ENCODE measurements at regions of chr1 and their contacts with region 1.

Region 1: GRCh38 chr1:169521226-169521625 is 35.5 kb upstream of the SLC19A2 start:
- DNase-seq: no peak
- ATAC-seq: no peak

Region 2: DNA sequence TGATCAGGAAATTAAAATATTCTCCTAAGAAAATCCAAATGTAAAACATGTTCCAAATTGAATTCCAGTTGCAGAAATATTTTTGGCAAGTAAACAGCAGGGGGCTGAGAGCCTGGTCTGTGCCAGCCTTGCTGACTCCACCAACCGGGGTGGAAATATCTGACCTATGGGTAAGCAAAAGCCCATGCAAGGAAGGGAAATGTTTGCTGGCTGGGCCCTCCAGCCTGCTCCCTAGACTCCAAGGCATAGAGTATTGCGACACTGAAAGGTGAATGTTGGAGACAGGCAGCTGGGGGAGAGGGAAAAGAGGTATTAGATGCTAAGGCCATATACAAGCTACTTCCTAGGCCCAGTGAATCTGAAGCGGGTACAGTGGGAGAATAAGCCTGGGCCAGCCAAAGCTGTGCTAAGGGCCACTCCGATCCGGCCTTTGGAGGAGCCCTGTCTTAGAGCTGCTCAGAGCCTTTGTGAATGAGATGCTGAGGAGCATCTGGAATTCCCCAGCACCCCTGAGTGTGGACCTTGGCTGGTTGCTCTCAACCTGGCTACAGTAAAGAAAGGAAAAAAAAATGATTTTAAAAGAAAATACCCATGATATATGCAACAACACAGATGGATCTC is 439.6 kb before region 1 on chr1:
- intact Hi-C with region 1: no loop called
- DNase-seq: no peak
- ATAC-seq: peak; percentile 24

Region 3: GRCh38 chr1:169680377-169681019 is 159.3 kb after region 1 on chr1:
- intact Hi-C with region 1: no loop called
- DNase-seq: no peak
- ATAC-seq: no peak

Region 4: GRCh38 chr1:169753552-169753951 is 232.3 kb after region 1 on chr1:
- intact Hi-C with region 1: loop called (anchors 5 kb)
- DNase-seq: no peak
- ATAC-seq: no peak